ENCODE measurements at regions of chr7 and their contacts with region 1.

Region 1: DNA sequence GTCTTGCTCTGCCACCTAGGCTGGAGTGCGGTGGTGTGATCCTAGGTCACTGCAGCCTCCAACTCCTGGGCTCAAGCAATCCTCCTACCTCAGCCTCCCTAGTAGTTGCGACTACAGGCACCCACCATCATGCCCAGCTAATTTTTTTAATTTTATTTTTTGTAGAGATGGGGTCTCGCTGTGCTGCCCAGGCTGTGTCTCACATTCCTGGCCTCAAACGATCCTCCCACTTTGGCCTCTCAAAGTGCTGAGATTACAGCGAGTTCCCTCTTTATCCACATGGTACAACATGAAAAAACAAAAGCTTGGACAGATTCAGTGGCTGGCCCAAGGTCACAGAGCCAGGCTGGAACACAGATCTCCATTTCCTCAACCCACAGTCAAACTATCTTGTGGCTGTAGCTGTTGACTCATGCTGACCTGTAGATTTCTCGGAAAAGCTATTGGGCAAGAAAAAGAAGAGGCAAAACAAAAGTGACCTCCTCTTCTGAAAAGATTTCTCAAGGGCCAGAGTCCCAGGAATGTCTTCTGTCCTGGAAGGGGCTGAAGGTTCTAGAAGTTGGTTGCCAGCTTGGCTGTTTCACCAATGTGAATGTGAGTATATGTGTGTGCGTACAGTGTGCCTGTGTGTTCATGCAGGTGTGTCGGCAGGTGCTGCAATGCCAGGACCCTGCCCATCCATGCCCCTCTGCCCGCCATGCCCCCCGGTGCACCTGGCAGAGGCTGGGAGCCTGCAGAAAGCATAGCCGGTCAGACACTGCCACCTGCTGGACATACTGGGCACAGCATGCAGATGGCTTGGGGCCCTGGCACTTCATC is 28.4 kb downstream of the TMEM130 start:
- DNase-seq: peak; percentile 46
- ATAC-seq: peak; percentile 76
- H3K4me3 ChIP-seq: no peak overlapping the region
- H3K27ac ChIP-seq: no peak overlapping the region
- H3K4me1 ChIP-seq: no peaks in the 10 kb centered on the region
- H3K27me3 ChIP-seq: no peaks in the 10 kb centered on the region
- CTCF ChIP-seq: peak; percentile 95

Region 2: DNA sequence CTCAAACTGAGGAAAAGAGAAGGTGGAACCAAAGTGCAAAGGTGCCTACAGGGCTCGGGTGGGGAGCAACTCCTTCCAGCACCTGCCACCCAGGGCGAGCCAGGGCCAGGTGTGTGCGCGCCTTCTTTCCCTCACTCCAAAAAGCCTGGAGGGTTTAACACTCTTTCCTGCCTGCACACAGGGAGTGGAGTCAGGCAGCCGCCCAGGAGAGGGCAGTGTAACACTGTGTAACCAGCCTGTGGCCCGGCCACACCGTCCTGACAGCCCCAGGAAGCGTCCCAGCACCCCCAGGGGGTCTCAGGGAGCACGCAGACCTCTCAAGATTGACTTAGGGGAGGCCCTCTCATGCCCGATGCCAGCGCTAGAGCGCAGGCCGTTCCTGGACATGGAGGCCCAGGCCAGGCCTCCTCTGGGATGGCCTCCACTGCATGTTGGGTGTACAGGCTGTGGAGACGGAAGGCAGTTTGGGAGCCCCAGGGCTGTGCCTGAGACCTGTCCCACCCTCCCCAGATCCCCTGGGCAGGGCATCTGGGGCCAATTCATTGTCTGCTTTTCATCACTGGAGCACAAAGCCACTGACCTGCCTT is 546.5 kb before region 1 on chr7:
- CTCF ChIA-PET with region 1: no interaction called
- POLR2A ChIA-PET with region 1: no interaction called
- in situ Hi-C with region 1: no loop called
- intact Hi-C with region 1: loop called (anchors 5 kb)
- DNase-seq: no peak
- ATAC-seq: peak; percentile 79
- H3K4me3 ChIP-seq: no peak overlapping the region
- H3K27ac ChIP-seq: peak overlapping the region; percentile 52
- H3K4me1 ChIP-seq: peaks cover 46% of the 10 kb centered on the region
- H3K27me3 ChIP-seq: no peaks in the 10 kb centered on the region
- CTCF ChIP-seq: peak; percentile 90

Region 3: GRCh38 chr7:98301693-98302470 is 539.5 kb before region 1 on chr7:
- CTCF ChIA-PET with region 1: no interaction called
- POLR2A ChIA-PET with region 1: interaction called, 10 read pairs
- in situ Hi-C with region 1: no loop called
- intact Hi-C with region 1: loop called (anchors 5 kb)
- DNase-seq: no peak
- ATAC-seq: no peak
- H3K4me3 ChIP-seq: no peak overlapping the region
- H3K27ac ChIP-seq: no peak overlapping the region
- H3K4me1 ChIP-seq: peaks cover 6% of the 10 kb centered on the region
- H3K27me3 ChIP-seq: no peaks in the 10 kb centered on the region
- CTCF ChIP-seq: no peak

Region 4: GRCh38 chr7:98434095-98434494 is 407.3 kb before region 1 on chr7:
- CTCF ChIA-PET with region 1: interaction called, 3 read pairs
- POLR2A ChIA-PET with region 1: no interaction called
- in situ Hi-C with region 1: no loop called
- intact Hi-C with region 1: loop called (anchors 1 kb)
- DNase-seq: no peak
- ATAC-seq: no peak
- H3K4me3 ChIP-seq: no peak overlapping the region
- H3K27ac ChIP-seq: no peak overlapping the region
- H3K4me1 ChIP-seq: no peaks in the 10 kb centered on the region
- H3K27me3 ChIP-seq: no peaks in the 10 kb centered on the region
- CTCF ChIP-seq: no peak

Region 5: DNA sequence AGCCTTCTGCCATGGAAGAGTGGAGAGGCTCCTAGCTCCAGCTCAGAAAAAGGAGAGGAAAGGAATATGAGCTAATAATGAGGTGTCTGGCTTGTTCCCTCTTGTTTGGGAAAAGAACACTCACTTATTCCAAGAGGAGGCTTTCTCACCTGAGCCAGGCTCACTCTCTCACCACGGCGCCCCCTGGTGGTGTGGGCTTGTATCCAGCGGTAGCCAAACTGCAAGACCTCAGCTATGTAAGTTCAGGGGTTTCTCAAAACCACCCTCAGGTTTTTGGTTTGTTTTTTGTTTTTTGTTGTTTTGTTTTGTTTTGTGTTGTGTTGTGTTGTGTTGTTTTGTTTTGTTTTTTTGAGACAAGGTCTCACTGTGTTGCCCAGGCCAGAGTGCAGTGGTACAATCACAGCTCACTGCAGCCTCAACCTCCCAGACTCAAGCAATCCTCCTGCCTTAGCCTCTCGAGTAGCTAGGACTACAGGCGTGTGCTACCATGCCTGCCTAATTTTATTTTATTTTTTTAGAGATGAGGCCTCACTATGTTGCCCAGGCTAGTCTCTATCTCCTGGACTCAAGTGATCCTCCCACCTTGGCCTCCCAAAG is 95.6 kb before region 1 on chr7:
- CTCF ChIA-PET with region 1: interaction called, 5 read pairs
- POLR2A ChIA-PET with region 1: no interaction called
- in situ Hi-C with region 1: no loop called
- intact Hi-C with region 1: loop called (anchors 5 kb)
- DNase-seq: peak; percentile 65
- ATAC-seq: peak; percentile 90
- H3K4me3 ChIP-seq: no peak overlapping the region
- H3K27ac ChIP-seq: no peak overlapping the region
- H3K4me1 ChIP-seq: no peaks in the 10 kb centered on the region
- H3K27me3 ChIP-seq: 0 out of 2 replicates have a peak, but pooled peaks cover 2% of the 10 kb centered on the region
- CTCF ChIP-seq: peak; percentile 94